GM12878 (cell line): ENCODE measurements at regions of chr7 and their contacts with region 1.

Region 1: GRCh38 chr7:26090927-26091519 is 61.0 kb upstream of the NFE2L3 start:
- DNase-seq: peak; percentile 30
- ATAC-seq: peak; percentile 87
- H3K4me3 ChIP-seq: no peak overlapping the region
- H3K27ac ChIP-seq: no peak overlapping the region
- H3K4me1 ChIP-seq: no peaks in the 10 kb centered on the region
- H3K27me3 ChIP-seq: no peaks in the 10 kb centered on the region
- CTCF ChIP-seq: peak; percentile 63 to 73 (median 65)
- EP300 ChIP-seq: no peak
- POLR2A ChIP-seq: no peak
- RAD21 ChIP-seq: peak; percentile 83

Region 2: GRCh38 chr7:26048663-26049062 is 42.4 kb before region 1 on chr7:
- CTCF ChIA-PET with region 1: no interaction called
- POLR2A ChIA-PET with region 1: no interaction called
- RAD21 ChIA-PET with region 1: no interaction called
- SMC1A ChIA-PET with region 1: no interaction called
- in situ Hi-C with region 1: no loop called
- intact Hi-C with region 1: no loop called
- DNase-seq: no peak
- ATAC-seq: no peak
- H3K4me3 ChIP-seq: no peak overlapping the region
- H3K27ac ChIP-seq: no peak overlapping the region
- H3K4me1 ChIP-seq: no peaks in the 10 kb centered on the region
- H3K27me3 ChIP-seq: peaks cover 0 to under 1% of the 10 kb centered on the region in 2 experiments; a peak in 2 of 4 replicates
- CTCF ChIP-seq: no peak
- EP300 ChIP-seq: no peak
- POLR2A ChIP-seq: no peak
- RAD21 ChIP-seq: no peak

Region 3: GRCh38 chr7:26078437-26079336 is 12.3 kb before region 1 on chr7:
- CTCF ChIA-PET with region 1: interaction called, 15 read pairs
- POLR2A ChIA-PET with region 1: no interaction called
- RAD21 ChIA-PET with region 1: interaction called, 12 read pairs
- SMC1A ChIA-PET with region 1: interaction called, 14 read pairs
- in situ Hi-C with region 1: no loop called
- intact Hi-C with region 1: no loop called
- DNase-seq: peak; percentile 36
- ATAC-seq: peak; percentile 98
- H3K4me3 ChIP-seq: no peak overlapping the region
- H3K27ac ChIP-seq: no peak overlapping the region
- H3K4me1 ChIP-seq: no peaks in the 10 kb centered on the region
- H3K27me3 ChIP-seq: peaks cover 2 to 5% of the 10 kb centered on the region in 2 experiments; a peak in 1 of 4 replicates
- CTCF ChIP-seq: peak; percentile 50 to 61 (median 53); a peak in 5 of 6 replicates
- EP300 ChIP-seq: no peak
- POLR2A ChIP-seq: no peak
- RAD21 ChIP-seq: peak; percentile 60

Region 4: GRCh38 chr7:26112203-26112740 is 21.2 kb after region 1 on chr7:
- CTCF ChIA-PET with region 1: interaction called, 25 read pairs
- POLR2A ChIA-PET with region 1: no interaction called
- RAD21 ChIA-PET with region 1: interaction called, 4 read pairs
- SMC1A ChIA-PET with region 1: interaction called, 7 read pairs
- in situ Hi-C with region 1: no loop called
- intact Hi-C with region 1: no loop called
- DNase-seq: no peak
- ATAC-seq: no peak
- H3K4me3 ChIP-seq: no peak overlapping the region
- H3K27ac ChIP-seq: no peak overlapping the region
- H3K4me1 ChIP-seq: peaks cover 4% of the 10 kb centered on the region
- H3K27me3 ChIP-seq: no peaks in the 10 kb centered on the region
- CTCF ChIP-seq: no peak
- EP300 ChIP-seq: no peak
- POLR2A ChIP-seq: no peak
- RAD21 ChIP-seq: no peak

Region 5: GRCh38 chr7:26160881-26161280 is 69.9 kb after region 1 on chr7:
- CTCF ChIA-PET with region 1: interaction called, 23 read pairs
- POLR2A ChIA-PET with region 1: interaction called, 3 read pairs
- RAD21 ChIA-PET with region 1: interaction called, 5 read pairs
- SMC1A ChIA-PET with region 1: interaction called, 24 read pairs
- in situ Hi-C with region 1: no loop called
- intact Hi-C with region 1: no loop called
- DNase-seq: no peak
- ATAC-seq: no peak
- H3K4me3 ChIP-seq: no peak overlapping the region
- H3K27ac ChIP-seq: no peak overlapping the region
- H3K4me1 ChIP-seq: peaks cover 28% of the 10 kb centered on the region
- H3K27me3 ChIP-seq: no peaks in the 10 kb centered on the region
- CTCF ChIP-seq: no peak
- EP300 ChIP-seq: no peak
- POLR2A ChIP-seq: no peak
- RAD21 ChIP-seq: no peak

Region 6: GRCh38 chr7:26187380-26188205 is 96.6 kb after region 1 on chr7:
- CTCF ChIA-PET with region 1: interaction called, 203 read pairs
- POLR2A ChIA-PET with region 1: interaction called, 3 read pairs
- RAD21 ChIA-PET with region 1: interaction called, 117 read pairs
- SMC1A ChIA-PET with region 1: interaction called, 163 read pairs
- in situ Hi-C with region 1: loop called (anchors 5 kb)
- intact Hi-C with region 1: no loop called
- DNase-seq: no peak
- ATAC-seq: peak; percentile 23
- H3K4me3 ChIP-seq: no peak overlapping the region
- H3K27ac ChIP-seq: no peak overlapping the region
- H3K4me1 ChIP-seq: peaks cover 12% of the 10 kb centered on the region
- H3K27me3 ChIP-seq: no peaks in the 10 kb centered on the region
- CTCF ChIP-seq: no peak
- EP300 ChIP-seq: no peak
- POLR2A ChIP-seq: peak; percentile 75
- RAD21 ChIP-seq: no peak

Region 7: GRCh38 chr7:26200444-26201246 is 109.6 kb after region 1 on chr7 and contains the start of gene HNRNPA2B1:
- CTCF ChIA-PET with region 1: interaction called, 203 read pairs
- POLR2A ChIA-PET with region 1: interaction called, 5 read pairs
- RAD21 ChIA-PET with region 1: interaction called, 117 read pairs
- SMC1A ChIA-PET with region 1: interaction called, 163 read pairs
- in situ Hi-C with region 1: no loop called
- intact Hi-C with region 1: loop called (anchors 2 kb)
- DNase-seq: peak; percentile 98
- ATAC-seq: peak; percentile 75
- H3K4me3 ChIP-seq: peak within 1 kb of the TSS; percentile 98
- H3K27ac ChIP-seq: peak within 1 kb of the TSS; percentile 96
- H3K4me1 ChIP-seq: 0 out of 2 replicates have a peak, but pooled peaks cover 3% of the 10 kb centered on the region
- H3K27me3 ChIP-seq: no peaks in the 10 kb centered on the region
- CTCF ChIP-seq: no peak
- EP300 ChIP-seq: no peak
- POLR2A ChIP-seq: peak; percentile 100
- RAD21 ChIP-seq: no peak
- polyA plus RNA-seq, gene HNRNPA2B1: 726 to 1,124 TPM

Region 8: GRCh38 chr7:26291699-26292538 is 200.9 kb after region 1 on chr7 and contains the start of gene SNX10:
- CTCF ChIA-PET with region 1: interaction called, 25 read pairs
- POLR2A ChIA-PET with region 1: interaction called, 3 read pairs
- RAD21 ChIA-PET with region 1: interaction called, 5 read pairs
- SMC1A ChIA-PET with region 1: interaction called, 8 read pairs
- in situ Hi-C with region 1: no loop called
- intact Hi-C with region 1: no loop called
- DNase-seq: no peak
- ATAC-seq: peak; percentile 80
- H3K4me3 ChIP-seq: peak within 1 kb of the TSS; percentile 98
- H3K27ac ChIP-seq: peak within 1 kb of the TSS; percentile 87
- H3K4me1 ChIP-seq: peaks cover 16% of the 10 kb centered on the region
- H3K27me3 ChIP-seq: no peaks in the 10 kb centered on the region
- CTCF ChIP-seq: peak; percentile 54 to 84 (median 54); a peak in 5 of 6 replicates
- EP300 ChIP-seq: no peak
- POLR2A ChIP-seq: peak; percentile 66; the same call in 1 of the 2 replicates
- RAD21 ChIP-seq: peak; percentile 67
- polyA plus RNA-seq, gene SNX10: 22.9 to 29.7 TPM